Right ventricle myocardium superior (tissue), 1 donor: ENCODE measurements at regions of chr4 and their contacts with region 1.

Region 1: GRCh38 chr4:88211473-88212252 is 53.2 kb upstream of the ABCG2 start:
- DNase-seq: no peak
- ATAC-seq: peak; percentile 61

Region 2: GRCh38 chr4:87856816-87857215 is 354.8 kb before region 1 on chr4:
- intact Hi-C with region 1: loop called (anchors 5 kb)
- DNase-seq: no peak
- ATAC-seq: no peak

Region 3: DNA sequence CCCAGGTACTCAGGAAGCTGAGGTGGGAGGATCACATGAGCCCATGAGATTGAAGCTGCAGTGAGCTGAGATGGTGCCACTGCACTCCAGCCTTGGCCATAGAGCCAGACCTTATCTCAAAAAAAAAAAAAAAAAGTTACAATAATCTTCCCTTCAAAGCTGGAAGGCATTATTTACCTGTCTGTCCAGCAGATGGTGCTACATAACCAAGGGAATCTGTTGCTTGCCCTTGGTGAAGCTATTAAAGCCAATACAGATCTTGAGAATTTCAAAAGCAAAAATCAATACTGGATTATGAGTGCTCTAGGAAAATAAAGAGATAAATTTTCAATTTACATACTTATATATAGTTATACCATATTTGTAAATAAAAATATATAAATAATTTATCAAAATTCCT is 178.4 kb before region 1 on chr4:
- intact Hi-C with region 1: loop called (anchors 5 kb)
- DNase-seq: no peak
- ATAC-seq: peak; percentile 63

Region 4: DNA sequence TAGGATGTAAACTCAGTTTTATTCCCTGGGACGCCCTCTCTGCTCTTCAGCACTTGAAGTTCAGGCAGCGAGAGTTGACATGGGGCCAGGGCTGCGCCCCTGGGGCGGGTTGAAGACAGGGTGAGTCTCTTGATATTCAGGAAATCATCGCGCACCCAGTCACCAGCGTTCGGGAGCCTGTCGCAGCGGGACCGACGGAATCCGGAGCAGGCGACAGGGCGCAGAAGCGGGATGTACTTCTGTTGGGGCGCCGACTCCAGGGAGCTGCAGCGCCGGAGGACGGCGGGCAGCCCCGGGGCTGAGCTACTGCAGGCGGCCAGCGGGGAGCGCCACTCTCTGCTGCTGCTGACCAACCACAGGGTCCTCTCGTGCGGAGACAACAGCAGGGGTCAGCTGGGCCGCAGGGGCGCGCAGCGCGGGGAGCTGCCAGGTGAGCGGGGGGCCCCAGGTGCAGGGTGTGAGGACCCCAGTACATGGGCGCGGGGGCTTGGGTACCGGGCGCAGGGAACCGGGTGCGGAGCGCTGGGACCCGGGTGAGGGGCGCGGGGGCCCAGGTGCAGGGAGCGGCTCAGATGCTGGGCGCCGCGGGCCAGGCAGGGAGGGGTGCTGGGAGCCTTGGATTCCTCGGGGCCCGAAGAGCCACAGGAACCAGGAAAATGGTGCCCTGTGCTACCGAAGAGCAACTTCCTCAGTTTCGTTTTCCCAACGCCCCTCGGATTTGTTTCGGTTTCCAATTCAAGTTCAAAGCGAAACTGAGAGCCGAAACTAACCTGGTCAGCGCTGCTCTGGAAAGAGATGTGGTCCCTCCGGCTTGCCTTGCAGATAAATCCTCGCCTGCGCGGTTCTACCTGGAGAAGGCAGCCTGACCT is 167.3 kb after region 1 on chr4 and contains the start of gene HERC6:
- intact Hi-C with region 1: loop called (anchors 5 kb)
- DNase-seq: peak; percentile 85
- ATAC-seq: peak; percentile 98
- total RNA-seq, gene HERC6: 6.3 TPM

Region 5: DNA sequence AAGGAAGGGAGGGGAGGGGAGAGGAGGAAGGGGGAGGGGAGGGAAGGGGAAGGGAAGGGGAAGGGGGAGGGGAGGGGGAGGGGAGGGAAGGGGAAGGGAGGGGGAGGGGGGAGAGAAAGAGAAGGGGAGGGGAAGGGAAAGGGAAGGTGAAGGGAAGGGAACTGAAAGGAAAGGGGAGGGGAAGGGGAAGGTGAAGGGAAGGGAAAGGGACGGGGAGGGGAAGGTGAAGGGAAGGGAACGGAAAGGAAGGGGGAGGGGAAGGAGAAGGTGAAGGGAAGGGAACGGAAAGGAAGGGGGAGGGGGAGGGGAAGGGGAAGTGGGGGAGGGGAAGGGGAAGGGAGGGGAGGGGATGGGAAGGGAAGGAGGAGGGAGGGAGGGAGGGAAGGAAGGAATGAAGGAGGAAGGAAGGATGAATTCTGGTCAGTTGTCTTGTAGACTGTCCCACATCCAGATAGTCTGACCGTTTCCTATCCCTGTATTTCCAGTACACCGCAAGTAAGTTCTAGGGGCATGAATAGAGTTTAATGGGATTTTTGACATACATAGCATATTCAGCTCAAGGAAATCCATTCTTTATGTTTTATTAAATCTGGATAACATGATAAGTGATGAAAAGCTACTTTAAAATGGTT is 265.7 kb after region 1 on chr4:
- intact Hi-C with region 1: no loop called
- DNase-seq: no peak
- ATAC-seq: no peak